ENCODE measurements at regions of chr18 and their contacts with region 1.

Region 1: GRCh38 chr18:32470713-32471633 is at the start of gene GAREM1:
- DNase-seq: peak; percentile 85
- H3K4me3 Mint-ChIP-seq: peak within 1 kb of the TSS; percentile 65
- H3K27ac Mint-ChIP-seq: no peak within 1 kb of the TSS
- H3K4me1 Mint-ChIP-seq: peaks cover 28% of the 10 kb centered on the region
- H3K27me3 Mint-ChIP-seq: peaks cover 46% of the 10 kb centered on the region
- total RNA-seq, gene GAREM1: 0.05 TPM in 1 of 2 experiments, not detected in the other

Region 2: GRCh38 chr18:32122039-32122438 is 348.9 kb before region 1 on chr18:
- CTCF ChIA-PET with region 1: no interaction called
- POLR2A ChIA-PET with region 1: no interaction called
- intact Hi-C with region 1: no loop called
- DNase-seq: no peak
- H3K4me3 Mint-ChIP-seq: no peak overlapping the region
- H3K27ac Mint-ChIP-seq: no peak overlapping the region
- H3K4me1 Mint-ChIP-seq: peaks cover 5% of the 10 kb centered on the region
- H3K27me3 Mint-ChIP-seq: no peaks in the 10 kb centered on the region

Region 3: DNA sequence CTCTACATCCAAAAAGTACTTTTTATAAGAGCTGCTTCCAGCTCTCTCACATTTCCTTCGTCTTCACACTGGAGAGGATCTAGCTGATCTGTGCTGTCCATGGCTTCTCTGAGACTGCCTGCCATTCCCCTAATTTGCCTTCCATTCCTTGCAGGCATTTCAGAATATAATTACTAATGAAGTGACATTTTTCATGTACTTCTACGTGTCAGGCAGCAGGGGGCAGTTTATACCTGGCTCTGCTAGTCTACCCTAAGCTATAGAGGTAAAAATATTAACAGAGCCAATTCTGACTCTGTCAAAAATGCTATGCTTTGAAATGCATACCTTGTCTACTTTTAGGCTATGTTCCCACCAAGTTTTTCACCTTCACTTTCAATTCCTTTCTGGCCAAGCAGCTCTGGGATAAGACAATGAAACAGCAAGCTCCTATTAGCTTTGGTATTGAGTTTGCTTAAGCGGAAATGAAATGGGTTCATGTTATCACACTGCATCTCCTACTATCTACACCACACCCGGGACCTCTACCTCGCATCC is 199.2 kb before region 1 on chr18:
- CTCF ChIA-PET with region 1: interaction called, 8 read pairs
- POLR2A ChIA-PET with region 1: no interaction called
- intact Hi-C with region 1: loop called (anchors 1 kb)
- DNase-seq: peak; percentile 27
- H3K4me3 Mint-ChIP-seq: no peak overlapping the region
- H3K27ac Mint-ChIP-seq: no peak overlapping the region
- H3K4me1 Mint-ChIP-seq: no peaks in the 10 kb centered on the region
- H3K27me3 Mint-ChIP-seq: no peaks in the 10 kb centered on the region

Region 4: GRCh38 chr18:32289483-32290075 is 181.4 kb before region 1 on chr18:
- CTCF ChIA-PET with region 1: interaction called, 14 read pairs
- POLR2A ChIA-PET with region 1: no interaction called
- intact Hi-C with region 1: loop called (anchors 5 kb)
- DNase-seq: peak; percentile 38
- H3K4me3 Mint-ChIP-seq: no peak overlapping the region
- H3K27ac Mint-ChIP-seq: no peak overlapping the region
- H3K4me1 Mint-ChIP-seq: no peaks in the 10 kb centered on the region
- H3K27me3 Mint-ChIP-seq: peaks cover 9% of the 10 kb centered on the region

Region 5: GRCh38 chr18:32530947-32531651 is 60.1 kb after region 1 on chr18:
- CTCF ChIA-PET with region 1: interaction called, 3 read pairs
- POLR2A ChIA-PET with region 1: no interaction called
- intact Hi-C with region 1: loop called (anchors 1 kb)
- DNase-seq: peak; percentile 16
- H3K4me3 Mint-ChIP-seq: no peak overlapping the region
- H3K27ac Mint-ChIP-seq: no peak overlapping the region
- H3K4me1 Mint-ChIP-seq: peaks cover 12% of the 10 kb centered on the region
- H3K27me3 Mint-ChIP-seq: peaks cover 5% of the 10 kb centered on the region

Region 6: DNA sequence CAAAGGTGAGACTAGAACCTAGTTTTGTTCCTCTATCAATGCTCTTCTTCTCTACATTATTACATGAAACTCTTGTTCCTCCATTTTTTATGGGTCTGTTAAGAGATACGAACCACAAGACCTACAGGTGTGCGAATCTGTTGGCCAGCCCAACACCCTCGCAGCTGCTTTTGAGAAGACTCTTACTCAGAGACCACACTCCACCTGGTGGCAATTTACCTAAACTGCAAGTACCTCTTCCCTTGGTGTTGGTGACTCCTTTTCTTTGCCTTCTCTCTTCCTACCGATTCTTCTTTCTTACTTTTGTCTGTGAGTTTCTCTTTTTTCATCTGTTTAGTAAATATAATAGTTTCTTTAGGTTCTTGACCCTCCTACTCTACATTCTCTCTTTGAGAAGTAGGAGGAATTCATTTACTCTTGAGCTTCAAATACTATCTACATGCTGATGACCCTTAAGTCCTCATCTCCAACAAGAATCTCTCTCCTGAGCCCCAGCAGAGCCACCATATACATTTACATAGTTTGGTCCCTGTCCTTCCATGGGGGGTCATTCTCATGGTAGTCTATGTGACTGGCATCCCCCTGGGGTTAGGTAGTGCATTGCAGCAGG is 81.6 kb after region 1 on chr18:
- CTCF ChIA-PET with region 1: interaction called, 9 read pairs
- POLR2A ChIA-PET with region 1: no interaction called
- intact Hi-C with region 1: loop called (anchors 5 kb)
- DNase-seq: peak; percentile 53
- H3K4me3 Mint-ChIP-seq: no peak overlapping the region
- H3K27ac Mint-ChIP-seq: no peak overlapping the region
- H3K4me1 Mint-ChIP-seq: no peaks in the 10 kb centered on the region
- H3K27me3 Mint-ChIP-seq: peaks cover 1% of the 10 kb centered on the region